Endothelial cell of umbilical vein (primary cell): ENCODE measurements at regions of chr14 and their contacts with region 1.

Region 1: GRCh38 chr14:102629808-102630350 is 37.4 kb downstream of the RCOR1 start:
- DNase-seq: no peak
- H3K4me3 ChIP-seq: no peak overlapping the region
- H3K27ac ChIP-seq: peak overlapping the region; percentile 77
- H3K4me1 ChIP-seq: peaks cover 34% of the 10 kb centered on the region
- H3K27me3 ChIP-seq: no peaks in the 10 kb centered on the region
- CTCF ChIP-seq: no peak
- POLR2A ChIP-seq: no peak

Region 2: DNA sequence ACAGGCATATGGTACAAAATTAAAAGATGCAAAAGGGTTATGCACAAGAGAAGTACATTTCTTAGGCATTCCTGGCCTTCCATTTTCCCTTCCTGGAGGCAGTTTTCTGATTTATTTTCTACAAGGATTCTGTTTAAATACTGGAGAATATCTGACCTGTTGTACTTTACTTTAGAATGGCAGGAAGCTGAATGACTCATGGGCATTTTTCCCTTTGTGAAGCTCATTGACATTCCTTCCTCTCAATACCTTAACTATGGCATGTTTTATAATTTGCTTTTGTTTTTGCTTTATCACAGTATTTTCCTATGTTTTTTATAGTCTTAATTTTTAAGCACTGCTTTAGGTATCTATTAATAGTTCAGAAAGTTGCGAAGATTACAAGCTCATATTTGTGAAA is 25.3 kb after region 1 on chr14:
- CTCF ChIA-PET with region 1: interaction called, 5 read pairs
- POLR2A ChIA-PET with region 1: interaction called, 5 read pairs
- dilution Hi-C with region 1: no loop called
- intact Hi-C with region 1: loop called (anchors 1 kb)
- DNase-seq: peak; percentile 92
- H3K4me3 ChIP-seq: peak overlapping the region in 1 of 3 experiments; percentile 51
- H3K27ac ChIP-seq: peak overlapping the region; percentile 97
- H3K4me1 ChIP-seq: peaks cover 20% of the 10 kb centered on the region
- H3K27me3 ChIP-seq: no peaks in the 10 kb centered on the region
- CTCF ChIP-seq: no peak
- POLR2A ChIP-seq: no peak

Region 3: DNA sequence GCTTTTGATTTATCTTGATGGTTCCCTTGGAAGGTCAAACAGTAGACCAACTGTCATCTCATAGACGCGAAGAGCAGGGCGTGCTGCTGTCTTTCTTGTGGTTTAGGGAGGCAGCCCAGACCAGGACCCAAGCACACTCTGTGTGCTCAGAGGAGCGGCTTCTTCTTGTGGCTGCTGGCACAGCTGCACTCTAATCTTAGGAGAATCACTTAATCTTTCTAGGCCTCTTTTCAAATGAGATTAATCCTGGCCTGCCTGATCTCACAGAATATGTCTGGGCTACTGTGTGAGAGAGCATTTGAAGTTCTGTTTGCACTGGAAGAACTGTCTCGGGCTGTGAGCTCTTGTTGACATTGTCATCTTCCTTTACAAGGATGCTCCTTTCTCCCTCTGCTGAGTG is 87.4 kb after region 1 on chr14:
- CTCF ChIA-PET with region 1: no interaction called
- POLR2A ChIA-PET with region 1: no interaction called
- dilution Hi-C with region 1: no loop called
- intact Hi-C with region 1: no loop called
- DNase-seq: no peak
- H3K4me3 ChIP-seq: no peak overlapping the region
- H3K27ac ChIP-seq: no peak overlapping the region
- H3K4me1 ChIP-seq: no peaks in the 10 kb centered on the region
- H3K27me3 ChIP-seq: no peaks in the 10 kb centered on the region
- CTCF ChIP-seq: no peak
- POLR2A ChIP-seq: no peak